SK-N-SH (cell line): ENCODE measurements at regions of chr22 and their contacts with region 1.

Region 1: GRCh38 chr22:25202290-25202921 is 2.7 kb downstream of the CRYBB3 start:
- DNase-seq: peak; percentile 89
- H3K4me3 ChIP-seq: peak overlapping the region in 1 of 2 experiments; percentile 57; a peak in 1 of 4 replicates
- H3K27ac ChIP-seq: no peak overlapping the region
- H3K4me1 ChIP-seq: no peaks in the 10 kb centered on the region
- H3K27me3 ChIP-seq: no peaks in the 10 kb centered on the region
- CTCF ChIP-seq: peak; percentile 92
- EP300 ChIP-seq: no peak
- RAD21 ChIP-seq: peak; percentile 91

Region 2: GRCh38 chr22:25143156-25144076 is 59.0 kb before region 1 on chr22:
- CTCF ChIA-PET with region 1: no interaction called
- POLR2A ChIA-PET with region 1: no interaction called
- DNase-seq: no peak
- H3K4me3 ChIP-seq: no peak overlapping the region
- H3K27ac ChIP-seq: no peak overlapping the region
- H3K4me1 ChIP-seq: peaks cover 0 to 22% of the 10 kb centered on the region in 2 experiments; a peak in 1 of 4 replicates
- H3K27me3 ChIP-seq: no peaks in the 10 kb centered on the region
- CTCF ChIP-seq: no peak
- EP300 ChIP-seq: no peak
- RAD21 ChIP-seq: no peak

Region 3: DNA sequence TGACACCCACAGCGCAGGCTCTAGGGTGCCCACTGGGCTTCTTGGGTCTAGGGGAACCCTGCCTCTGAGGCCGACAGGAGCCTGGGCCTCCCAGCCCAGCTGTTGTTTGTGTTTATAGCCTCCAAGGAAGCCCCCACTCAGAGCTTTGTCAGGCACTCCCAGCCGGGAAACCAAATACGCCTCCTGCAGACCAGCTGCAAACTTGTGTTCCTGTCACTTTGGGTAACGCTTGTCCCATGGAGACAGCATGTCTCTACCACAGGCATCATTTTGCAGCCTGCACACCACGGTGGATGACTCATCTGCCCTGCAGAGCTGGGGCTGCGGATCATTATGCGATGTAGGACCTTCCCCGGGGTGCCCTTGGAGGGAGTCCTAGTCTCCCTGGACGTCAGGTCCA is 43.4 kb before region 1 on chr22:
- CTCF ChIA-PET with region 1: interaction called, 13 read pairs
- POLR2A ChIA-PET with region 1: no interaction called
- DNase-seq: no peak
- H3K4me3 ChIP-seq: no peak overlapping the region
- H3K27ac ChIP-seq: no peak overlapping the region
- H3K4me1 ChIP-seq: peaks cover 0 to 9% of the 10 kb centered on the region in 2 experiments; a peak in 1 of 4 replicates
- H3K27me3 ChIP-seq: no peaks in the 10 kb centered on the region
- CTCF ChIP-seq: no peak
- EP300 ChIP-seq: no peak
- RAD21 ChIP-seq: no peak

Region 4: GRCh38 chr22:25169278-25170031 is 33.0 kb before region 1 on chr22:
- CTCF ChIA-PET with region 1: interaction called, 14 read pairs
- POLR2A ChIA-PET with region 1: no interaction called
- DNase-seq: no peak
- H3K4me3 ChIP-seq: no peak overlapping the region
- H3K27ac ChIP-seq: no peak overlapping the region
- H3K4me1 ChIP-seq: no peaks in the 10 kb centered on the region; a peak in 1 of 4 replicates
- H3K27me3 ChIP-seq: no peaks in the 10 kb centered on the region
- CTCF ChIP-seq: no peak
- EP300 ChIP-seq: no peak
- RAD21 ChIP-seq: no peak

Region 5: DNA sequence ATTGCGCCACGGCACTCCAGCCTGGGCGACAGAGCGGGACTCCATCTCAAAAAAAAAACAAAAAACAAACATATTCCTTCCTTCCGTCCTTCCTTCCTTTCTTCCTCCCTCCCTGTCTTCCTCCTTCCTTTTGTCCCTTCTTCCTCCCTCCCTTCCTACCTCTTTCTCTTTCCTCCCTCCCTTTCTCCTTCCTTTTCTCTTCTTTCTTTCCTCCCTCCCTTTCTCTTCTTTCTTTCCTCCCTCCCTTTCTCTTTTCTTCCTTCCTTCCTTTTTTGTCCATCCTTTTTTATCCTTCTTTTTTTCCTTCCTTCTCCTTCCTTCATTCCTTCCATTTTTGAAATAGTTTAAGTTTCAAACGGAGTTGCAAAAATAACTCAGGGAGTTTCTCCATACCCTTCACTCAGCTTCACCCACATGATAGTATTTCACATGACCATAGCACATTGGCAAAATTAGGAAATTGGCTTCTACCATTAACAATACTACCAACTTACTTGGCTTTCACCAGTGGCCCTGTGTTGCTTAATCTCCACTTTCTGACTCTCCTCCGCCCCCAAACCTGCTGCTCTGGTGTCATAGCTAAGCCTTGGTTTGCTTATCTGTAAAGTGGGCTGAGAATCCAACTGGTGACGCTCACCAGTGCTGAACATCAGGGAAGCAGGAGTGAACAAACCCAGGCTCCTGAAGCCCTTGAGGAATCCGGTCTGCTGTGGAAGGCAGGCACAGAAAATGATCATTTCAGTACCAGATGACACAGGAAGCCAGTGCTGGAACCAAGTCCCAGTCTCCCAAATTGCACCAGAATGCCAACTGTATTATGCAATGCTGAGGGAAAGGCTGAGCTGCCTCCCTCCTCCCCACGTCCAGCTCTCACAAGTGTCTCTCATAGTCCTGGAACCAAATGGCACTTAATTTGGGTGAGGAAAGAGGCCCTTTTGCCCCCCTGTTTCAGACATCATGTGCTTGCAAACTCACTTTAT is 20.0 kb before region 1 on chr22:
- CTCF ChIA-PET with region 1: interaction called, 41 read pairs
- POLR2A ChIA-PET with region 1: no interaction called
- DNase-seq: no peak
- H3K4me3 ChIP-seq: no peak overlapping the region
- H3K27ac ChIP-seq: no peak overlapping the region
- H3K4me1 ChIP-seq: no peaks in the 10 kb centered on the region
- H3K27me3 ChIP-seq: no peaks in the 10 kb centered on the region
- CTCF ChIP-seq: no peak
- EP300 ChIP-seq: no peak
- RAD21 ChIP-seq: no peak

Region 6: GRCh38 chr22:25223269-25223838 is 20.9 kb after region 1 on chr22:
- CTCF ChIA-PET with region 1: interaction called, 24 read pairs
- POLR2A ChIA-PET with region 1: no interaction called
- DNase-seq: no peak
- H3K4me3 ChIP-seq: no peak overlapping the region
- H3K27ac ChIP-seq: no peak overlapping the region
- H3K4me1 ChIP-seq: peaks cover 0 to 10% of the 10 kb centered on the region in 2 experiments; a peak in 1 of 4 replicates
- H3K27me3 ChIP-seq: no peaks in the 10 kb centered on the region; the same call in 1 of the 2 replicates
- CTCF ChIP-seq: no peak
- EP300 ChIP-seq: no peak
- RAD21 ChIP-seq: no peak

Region 7: DNA sequence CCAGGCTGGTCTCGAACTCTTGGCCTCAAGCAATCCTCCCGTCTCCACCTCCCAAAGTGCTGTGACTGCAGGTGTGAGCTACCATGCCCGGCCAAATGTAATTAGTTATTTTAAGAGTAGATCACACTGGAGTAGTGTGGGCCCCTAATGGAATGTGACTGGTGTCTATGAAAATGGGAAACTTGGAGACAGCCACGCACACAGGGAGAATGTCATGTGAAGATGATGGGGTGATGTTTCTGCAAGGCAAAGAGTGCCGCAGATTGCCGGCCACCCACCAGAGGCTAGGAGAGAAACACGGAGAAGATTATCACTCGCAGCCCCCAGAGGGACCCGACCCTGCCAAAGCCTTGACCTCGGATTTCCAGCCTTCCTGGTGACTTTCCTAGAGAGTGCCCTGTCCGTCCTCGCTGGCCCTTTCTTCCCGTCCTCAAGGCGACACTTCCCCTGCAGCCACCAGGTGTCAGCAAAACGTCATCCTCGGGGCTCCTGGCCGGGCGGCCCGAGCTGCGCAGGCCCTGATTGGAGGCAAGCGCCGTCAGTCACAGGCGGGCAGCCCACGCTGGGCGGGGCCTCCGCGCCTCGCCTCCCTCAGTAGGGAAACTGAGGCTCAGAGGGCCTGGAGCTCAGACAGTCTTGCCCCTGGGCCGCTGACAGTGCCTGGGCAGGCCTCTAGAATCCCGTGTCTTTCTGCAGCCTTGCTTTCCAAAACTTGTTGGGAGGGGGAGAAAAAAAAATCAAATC is 33.3 kb after region 1 on chr22:
- CTCF ChIA-PET with region 1: interaction called, 11 read pairs
- POLR2A ChIA-PET with region 1: no interaction called
- DNase-seq: peak; percentile 100
- H3K4me3 ChIP-seq: peak overlapping the region in 1 of 2 experiments; percentile 38; a peak in 3 of 4 replicates
- H3K27ac ChIP-seq: no peak overlapping the region
- H3K4me1 ChIP-seq: peaks cover 0 to 4% of the 10 kb centered on the region in 2 experiments; a peak in 1 of 4 replicates
- H3K27me3 ChIP-seq: no peaks in the 10 kb centered on the region
- CTCF ChIP-seq: peak; percentile 72
- EP300 ChIP-seq: no peak
- RAD21 ChIP-seq: peak; percentile 96

Region 8: GRCh38 chr22:25772288-25772687 is 569.9 kb after region 1 on chr22:
- CTCF ChIA-PET with region 1: interaction called, 37 read pairs
- POLR2A ChIA-PET with region 1: no interaction called
- DNase-seq: no peak
- H3K4me3 ChIP-seq: no peak overlapping the region
- H3K27ac ChIP-seq: no peak overlapping the region
- H3K4me1 ChIP-seq: peaks cover 0 to 17% of the 10 kb centered on the region in 2 experiments; a peak in 1 of 4 replicates
- H3K27me3 ChIP-seq: no peaks in the 10 kb centered on the region
- CTCF ChIP-seq: no peak
- EP300 ChIP-seq: no peak
- RAD21 ChIP-seq: no peak